ENCODE measurements at regions of chr3 and their contacts with region 1.

Region 1: GRCh38 chr3:19940638-19941037 is 6.3 kb upstream of the RAB5A start:
- DNase-seq: no peak
- ATAC-seq: no peak
- H3K4me3 ChIP-seq: no peak overlapping the region
- H3K27ac ChIP-seq: no peak overlapping the region
- H3K4me1 ChIP-seq: no peaks in the 10 kb centered on the region; the same call in 1 of the 2 replicates
- H3K27me3 ChIP-seq: no peaks in the 10 kb centered on the region
- CTCF ChIP-seq: no peak
- POLR2A ChIP-seq: no peak
- RAD21 ChIP-seq: no peak

Region 2: DNA sequence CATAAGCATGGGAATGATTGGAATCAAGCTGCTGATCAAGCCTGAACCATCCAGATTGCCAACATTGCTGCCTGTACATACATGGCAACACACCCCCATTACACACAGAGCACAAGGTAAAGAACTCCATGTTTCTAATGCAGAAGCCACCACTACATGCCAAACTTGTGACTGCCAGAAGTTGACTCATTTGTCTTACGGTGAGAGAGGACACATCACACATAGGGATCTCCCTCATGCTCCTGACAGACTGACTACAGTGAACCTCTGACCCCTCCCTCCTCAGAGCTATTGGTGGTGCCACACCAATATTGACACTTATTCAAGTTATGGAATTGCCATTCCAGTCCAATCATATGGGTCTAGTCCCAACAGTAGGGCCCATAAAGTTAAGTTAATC is 48.9 kb before region 1 on chr3:
- CTCF ChIA-PET with region 1: no interaction called
- POLR2A ChIA-PET with region 1: no interaction called
- dilution Hi-C with region 1: no loop called
- in situ Hi-C with region 1: loop called (anchors 5 kb)
- intact Hi-C with region 1: no loop called
- DNase-seq: peak; percentile 61
- ATAC-seq: no peak
- H3K4me3 ChIP-seq: no peak overlapping the region
- H3K27ac ChIP-seq: no peak overlapping the region
- H3K4me1 ChIP-seq: peaks cover 12% of the 10 kb centered on the region
- H3K27me3 ChIP-seq: no peaks in the 10 kb centered on the region
- CTCF ChIP-seq: no peak
- POLR2A ChIP-seq: no peak
- RAD21 ChIP-seq: no peak